ENCODE measurements at regions of chr3 and their contacts with region 1.

Region 1: DNA sequence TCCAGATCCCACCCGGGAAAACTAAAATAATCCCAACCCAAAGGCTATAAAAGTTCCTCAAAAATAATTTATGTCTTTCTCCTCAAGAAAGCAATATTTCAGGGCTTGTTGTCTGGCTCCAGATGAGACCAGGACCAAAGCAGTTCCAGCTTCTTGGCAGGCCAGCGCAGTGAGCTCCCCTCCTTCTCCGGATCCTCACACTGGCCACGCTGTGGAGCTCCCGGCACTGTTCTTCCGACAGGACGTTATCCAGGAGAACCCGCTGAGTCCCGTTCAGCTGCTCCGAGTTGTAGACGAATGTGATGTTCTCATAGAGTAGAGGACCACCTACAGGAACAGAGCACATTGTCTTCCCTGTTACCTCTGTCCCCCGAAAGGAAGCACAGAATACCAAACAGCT is 146.3 kb downstream of the P3H2 start:
- DNase-seq: no peak
- H3K4me3 ChIP-seq: no peak overlapping the region
- H3K27ac ChIP-seq: no peak overlapping the region
- H3K4me1 ChIP-seq: no peaks in the 10 kb centered on the region
- H3K27me3 ChIP-seq: no peaks in the 10 kb centered on the region
- CTCF ChIP-seq: no peak

Region 2: GRCh38 chr3:190008432-190008831 is 34.1 kb after region 1 on chr3:
- intact Hi-C with region 1: loop called (anchors 5 kb)
- DNase-seq: no peak
- H3K4me3 ChIP-seq: no peak overlapping the region
- H3K27ac ChIP-seq: no peak overlapping the region
- H3K4me1 ChIP-seq: peaks cover 0 to 3% of the 10 kb centered on the region in 2 donors
- H3K27me3 ChIP-seq: no peaks in the 10 kb centered on the region
- CTCF ChIP-seq: no peak

Measured in ascending aorta (tissue), 2 donors.